ENCODE measurements at regions of chr12 and their contacts with region 1.

Region 1: GRCh38 chr12:118436002-118436730 is 59.8 kb downstream of the SUDS3 start:
- DNase-seq: peak in 1 of 2 experiments; percentile 57
- H3K4me3 ChIP-seq: no peak overlapping the region
- H3K27ac ChIP-seq: no peak overlapping the region
- H3K4me1 ChIP-seq: no peaks in the 10 kb centered on the region
- H3K27me3 ChIP-seq: no peaks in the 10 kb centered on the region
- CTCF ChIP-seq: peak; percentile 30 to 78 (median 75)
- EP300 ChIP-seq: no peak
- POLR2A ChIP-seq: no peak
- RAD21 ChIP-seq: peak; percentile 93 to 95

Region 2: DNA sequence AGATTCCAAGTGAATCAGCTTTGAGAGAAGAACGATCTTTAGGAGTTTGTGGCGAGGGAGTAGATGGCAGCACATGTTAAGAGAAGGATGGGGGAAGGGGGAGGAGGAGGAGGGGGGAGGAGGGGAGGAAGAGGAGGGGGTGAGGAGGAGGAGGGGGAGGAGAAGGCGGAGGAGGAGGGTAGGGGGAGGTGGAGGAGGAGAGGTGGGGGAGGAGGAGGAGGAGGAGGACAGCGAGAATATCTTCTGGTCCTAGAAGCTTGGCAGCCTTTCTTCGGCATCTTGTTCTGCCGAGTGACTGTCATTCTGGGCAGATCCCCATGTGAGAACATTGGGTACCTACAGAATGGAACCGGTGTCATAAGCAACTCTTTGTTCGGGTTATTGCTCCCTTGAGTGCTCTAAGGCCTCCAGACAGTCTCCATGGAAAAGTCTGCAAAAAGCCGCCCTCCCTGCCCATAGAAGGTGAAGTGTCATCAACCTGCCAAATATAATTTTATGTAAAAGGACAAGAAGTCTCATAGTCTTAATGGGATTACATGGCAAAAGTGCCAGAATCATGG is 412.8 kb before region 1 on chr12:
- CTCF ChIA-PET with region 1: no interaction called
- POLR2A ChIA-PET with region 1: no interaction called
- DNase-seq: no peak
- H3K4me3 ChIP-seq: no peak overlapping the region
- H3K27ac ChIP-seq: no peak overlapping the region
- H3K4me1 ChIP-seq: no peaks in the 10 kb centered on the region
- H3K27me3 ChIP-seq: no peaks in the 10 kb centered on the region
- CTCF ChIP-seq: no peak
- EP300 ChIP-seq: no peak
- POLR2A ChIP-seq: no peak
- RAD21 ChIP-seq: no peak

Region 3: GRCh38 chr12:118346895-118347294 is 89.3 kb before region 1 on chr12:
- CTCF ChIA-PET with region 1: no interaction called
- POLR2A ChIA-PET with region 1: no interaction called
- DNase-seq: no peak
- H3K4me3 ChIP-seq: no peak overlapping the region
- H3K27ac ChIP-seq: no peak overlapping the region
- H3K4me1 ChIP-seq: peaks cover 0 to 4% (median 0%) of the 10 kb centered on the region in 4 experiments; a peak in 2 of 7 replicates
- H3K27me3 ChIP-seq: no peaks in the 10 kb centered on the region
- CTCF ChIP-seq: no peak
- EP300 ChIP-seq: no peak
- POLR2A ChIP-seq: no peak
- RAD21 ChIP-seq: no peak

Region 4: DNA sequence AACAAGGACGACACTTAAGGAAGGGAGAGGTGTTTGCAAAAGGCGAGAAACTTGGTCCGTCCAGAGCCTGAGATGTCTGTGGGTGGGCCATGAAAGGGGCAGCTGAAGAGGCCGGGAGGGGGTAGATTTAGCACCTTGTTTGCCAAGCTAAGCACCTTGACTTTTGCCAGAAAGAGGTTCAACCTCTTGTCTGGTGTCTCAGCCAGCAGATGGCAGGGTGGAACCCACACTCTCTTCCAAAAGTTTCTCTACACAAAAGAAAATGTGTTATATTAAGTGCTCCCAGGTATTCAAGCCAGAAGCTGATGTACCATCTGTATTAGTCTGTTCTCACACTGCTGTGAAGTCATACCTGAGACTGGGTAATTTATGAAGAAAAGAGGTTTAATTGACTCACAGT is 10.1 kb after region 1 on chr12:
- CTCF ChIA-PET with region 1: interaction called, 34 read pairs
- POLR2A ChIA-PET with region 1: interaction called, 3 read pairs
- DNase-seq: no peak
- H3K4me3 ChIP-seq: no peak overlapping the region
- H3K27ac ChIP-seq: no peak overlapping the region
- H3K4me1 ChIP-seq: no peaks in the 10 kb centered on the region
- H3K27me3 ChIP-seq: no peaks in the 10 kb centered on the region
- CTCF ChIP-seq: peak in 2 of 3 experiments; percentile 13 to 20; a peak in 3 of 4 replicates
- EP300 ChIP-seq: no peak
- POLR2A ChIP-seq: no peak
- RAD21 ChIP-seq: peak; percentile 16 to 50; a peak in 3 of 4 replicates

Region 5: GRCh38 chr12:118611295-118611694 is 175.1 kb after region 1 on chr12:
- CTCF ChIA-PET with region 1: interaction called, 13 read pairs
- POLR2A ChIA-PET with region 1: interaction called, 3 read pairs
- DNase-seq: no peak
- H3K4me3 ChIP-seq: no peak overlapping the region
- H3K27ac ChIP-seq: no peak overlapping the region
- H3K4me1 ChIP-seq: peaks cover 0 to 5% (median 4%) of the 10 kb centered on the region in 4 experiments; a peak in 3 of 7 replicates
- H3K27me3 ChIP-seq: no peaks in the 10 kb centered on the region
- CTCF ChIP-seq: no peak
- EP300 ChIP-seq: no peak
- POLR2A ChIP-seq: no peak
- RAD21 ChIP-seq: no peak

Region 6: DNA sequence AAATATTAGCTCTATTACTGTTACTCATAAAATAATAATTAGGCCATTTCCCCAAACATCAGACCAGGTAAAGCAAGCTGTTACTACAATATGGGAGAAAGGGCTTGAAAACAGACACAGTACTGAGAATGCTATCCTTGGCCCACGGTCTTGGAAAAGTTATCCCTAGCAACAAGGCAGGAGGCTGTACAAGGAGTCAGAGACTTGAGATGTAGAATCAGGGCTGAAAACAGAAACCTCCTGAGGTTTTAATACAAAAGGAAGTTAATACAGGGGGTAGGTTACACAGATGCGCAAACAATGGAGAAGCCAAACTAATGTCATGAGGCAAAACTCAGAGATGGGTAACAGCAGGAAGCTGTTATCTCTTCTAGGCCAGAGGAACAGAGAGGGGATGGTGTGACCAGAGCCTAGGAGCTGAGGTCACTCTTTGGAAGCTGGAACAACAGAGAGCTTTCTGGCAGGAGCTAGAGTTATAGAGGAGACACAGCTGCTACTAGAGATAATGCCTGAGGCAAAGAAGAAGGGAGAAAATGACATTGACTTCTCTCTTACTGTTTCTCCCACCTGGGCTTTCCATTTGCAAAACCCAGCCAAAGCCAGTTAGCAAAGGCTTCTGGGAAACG is 189.0 kb after region 1 on chr12:
- CTCF ChIA-PET with region 1: interaction called, 28 read pairs
- POLR2A ChIA-PET with region 1: no interaction called
- DNase-seq: no peak
- H3K4me3 ChIP-seq: no peak overlapping the region
- H3K27ac ChIP-seq: no peak overlapping the region
- H3K4me1 ChIP-seq: no peaks in the 10 kb centered on the region
- H3K27me3 ChIP-seq: no peaks in the 10 kb centered on the region
- CTCF ChIP-seq: no peak
- EP300 ChIP-seq: no peak
- POLR2A ChIP-seq: no peak
- RAD21 ChIP-seq: no peak

Region 7: DNA sequence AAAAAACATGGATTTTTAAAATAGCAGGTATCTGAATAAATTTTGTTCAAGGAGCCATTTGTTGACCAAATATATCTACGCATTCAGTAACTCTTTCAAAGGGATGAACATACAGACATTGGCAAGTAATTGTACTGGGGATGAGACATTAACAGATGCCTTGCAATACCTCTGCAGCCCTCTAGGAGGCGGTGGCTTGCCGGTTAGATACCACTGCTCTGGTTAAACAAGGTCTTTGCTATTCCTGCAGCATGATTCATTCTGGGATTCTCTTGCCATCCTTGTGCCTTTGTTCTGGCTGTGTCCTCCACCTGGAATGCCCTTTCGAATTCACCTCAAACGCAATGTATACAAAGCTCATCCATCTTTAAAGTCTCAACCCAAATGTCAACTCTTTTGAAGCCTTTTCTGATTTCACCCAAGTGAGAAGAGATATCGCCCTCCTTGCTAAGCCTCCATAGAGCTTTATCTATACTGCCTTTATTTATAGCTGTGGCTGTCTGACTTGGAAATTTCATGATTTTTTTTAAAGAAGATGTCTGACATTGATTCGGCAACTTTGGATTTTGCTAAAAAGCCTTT is 414.2 kb after region 1 on chr12:
- CTCF ChIA-PET with region 1: interaction called, 10 read pairs
- POLR2A ChIA-PET with region 1: no interaction called
- DNase-seq: peak; percentile 53 to 84
- H3K4me3 ChIP-seq: no peak overlapping the region
- H3K27ac ChIP-seq: no peak overlapping the region
- H3K4me1 ChIP-seq: peaks cover 0 to 2% (median 0%) of the 10 kb centered on the region in 4 experiments; a peak in 1 of 7 replicates
- H3K27me3 ChIP-seq: no peaks in the 10 kb centered on the region
- CTCF ChIP-seq: peak; percentile 68 to 98 (median 80)
- EP300 ChIP-seq: no peak; a peak in 1 of 3 replicates
- POLR2A ChIP-seq: no peak
- RAD21 ChIP-seq: peak; percentile 86 to 88

Measured in H1 (cell line).